Activated T-helper 2 cell treated with anti-CD3 and anti-CD28 coated beads, Interferon-gamma antibody, Interleukin-2, Interleukin-4, amounts not matched to agents 10 μg/mL and 5 μg/mL and 100 μg/mL, durations not matched to agents 14 hours and 24 hours and 36 hours (primary cell): ENCODE measurements at regions of chr12 and their contacts with region 1.

Region 1: DNA sequence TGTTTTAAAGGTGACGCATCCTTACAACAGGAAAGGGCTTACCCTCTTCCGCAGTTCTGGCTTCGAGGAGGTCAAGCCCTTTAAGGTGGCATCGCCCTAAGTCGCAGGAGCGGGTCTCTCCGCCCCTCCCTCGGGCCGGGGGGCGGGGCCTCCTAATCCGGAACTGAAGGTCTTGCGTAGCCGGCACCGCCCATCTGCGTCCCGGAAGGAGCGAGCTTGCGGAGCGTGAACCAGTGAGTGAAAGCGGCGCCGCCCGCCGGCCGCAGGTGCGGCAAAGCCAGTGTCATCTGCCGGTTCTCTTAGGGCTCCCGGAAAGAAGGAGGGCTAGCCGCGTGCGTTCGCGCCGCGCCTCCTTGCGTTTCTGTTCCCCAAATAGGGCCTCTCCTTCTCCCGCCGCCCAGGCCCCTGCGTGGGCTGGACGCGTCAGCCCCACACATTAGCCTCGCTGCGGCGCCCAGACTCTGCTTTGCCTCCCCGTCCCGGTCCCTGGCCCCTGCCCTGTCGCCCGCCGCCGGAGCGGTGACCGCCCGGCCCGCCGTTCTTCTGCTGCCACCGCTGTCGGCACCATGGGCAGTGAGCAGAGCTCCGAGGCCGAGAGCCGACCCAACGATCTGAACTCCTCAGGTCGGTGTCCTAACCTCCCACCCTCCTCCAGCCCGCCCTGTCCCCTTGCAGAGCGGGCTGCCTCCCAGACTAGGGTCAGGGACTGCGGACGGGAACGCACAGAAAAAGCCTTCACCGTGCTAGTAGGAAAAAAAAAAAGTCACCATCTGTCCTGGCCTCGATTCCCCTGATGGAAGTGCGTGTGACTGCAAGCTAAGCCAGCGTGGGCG is at the start of gene BORCS5:
- DNase-seq: peak; percentile 98
- H3K4me3 Mint-ChIP-seq: peak within 1 kb of the TSS; percentile 96
- H3K27ac Mint-ChIP-seq: peak within 1 kb of the TSS; percentile 99
- H3K4me1 Mint-ChIP-seq: peaks cover 41% of the 10 kb centered on the region
- H3K27me3 Mint-ChIP-seq: no peaks in the 10 kb centered on the region
- total RNA-seq, gene BORCS5: 41.8 and 45.9 TPM in 2 replicates

Region 2: GRCh38 chr12:12696562-12697383 is 339.7 kb after region 1 on chr12:
- intact Hi-C with region 1: loop called (anchors 1 kb)
- DNase-seq: peak; percentile 90
- H3K4me3 Mint-ChIP-seq: peak overlapping the region; percentile 97
- H3K27ac Mint-ChIP-seq: peak overlapping the region; percentile 99
- H3K4me1 Mint-ChIP-seq: peaks cover 58% of the 10 kb centered on the region
- H3K27me3 Mint-ChIP-seq: no peaks in the 10 kb centered on the region